Activated T-helper 2 cell treated with anti-CD3 and anti-CD28 coated beads, Interferon-gamma antibody, Interleukin-2, Interleukin-4, amounts not matched to agents 10 μg/mL and 5 μg/mL and 100 μg/mL, durations not matched to agents 14 hours and 24 hours and 36 hours (primary cell): ENCODE measurements at regions of chr2 and their contacts with region 1.

Region 1: DNA sequence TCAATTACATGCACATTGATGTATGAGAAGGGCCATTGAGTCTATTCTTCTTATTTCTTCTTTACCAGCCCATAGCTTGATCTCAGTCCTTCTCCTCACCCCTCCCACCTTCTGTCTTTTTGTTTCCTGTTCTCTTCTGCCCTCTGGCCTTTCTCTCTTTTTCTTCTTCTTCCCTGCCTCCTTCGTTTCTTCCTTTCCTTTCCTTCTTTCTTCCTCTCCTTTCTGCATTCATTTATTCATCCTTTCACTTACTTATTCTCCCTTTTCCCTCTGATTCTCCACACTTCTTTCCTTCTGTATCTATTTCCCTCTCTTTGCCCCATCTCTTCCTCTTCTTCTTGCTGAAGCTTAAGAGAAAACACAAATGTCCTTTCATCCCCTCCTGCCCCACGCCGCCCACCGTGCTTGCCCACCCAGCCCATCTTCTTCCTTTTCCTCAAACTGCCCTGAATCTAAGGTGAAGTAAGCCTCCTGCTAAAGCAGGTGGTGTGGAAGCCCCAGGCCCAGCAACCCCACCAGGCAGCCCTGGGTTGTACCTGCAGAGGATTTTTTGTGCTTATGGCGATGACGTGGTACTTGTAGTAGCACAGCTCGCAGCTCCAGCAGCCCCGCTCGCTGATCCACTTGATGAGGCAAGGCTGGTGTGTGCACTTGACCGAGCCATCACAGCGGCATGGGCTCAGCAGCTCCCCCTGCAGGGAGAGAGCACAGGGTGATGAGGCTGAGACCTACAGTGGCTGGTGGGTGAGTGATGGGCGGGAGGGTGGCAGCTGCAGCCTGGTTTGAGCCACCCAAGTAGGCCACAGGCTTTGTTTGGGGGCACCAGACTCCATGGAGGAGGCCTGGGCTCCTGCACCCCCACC is 89.0 kb downstream of the MARCHF4 start:
- DNase-seq: no peak
- H3K4me3 Mint-ChIP-seq: no peak overlapping the region
- H3K27ac Mint-ChIP-seq: no peak overlapping the region
- H3K4me1 Mint-ChIP-seq: no peaks in the 10 kb centered on the region
- H3K27me3 Mint-ChIP-seq: no peaks in the 10 kb centered on the region

Region 2: GRCh38 chr2:215476424-215476823 is 806.8 kb before region 1 on chr2:
- intact Hi-C with region 1: no loop called
- DNase-seq: no peak
- H3K4me3 Mint-ChIP-seq: no peak overlapping the region
- H3K27ac Mint-ChIP-seq: no peak overlapping the region
- H3K4me1 Mint-ChIP-seq: no peaks in the 10 kb centered on the region
- H3K27me3 Mint-ChIP-seq: peaks cover 6% of the 10 kb centered on the region

Region 3: DNA sequence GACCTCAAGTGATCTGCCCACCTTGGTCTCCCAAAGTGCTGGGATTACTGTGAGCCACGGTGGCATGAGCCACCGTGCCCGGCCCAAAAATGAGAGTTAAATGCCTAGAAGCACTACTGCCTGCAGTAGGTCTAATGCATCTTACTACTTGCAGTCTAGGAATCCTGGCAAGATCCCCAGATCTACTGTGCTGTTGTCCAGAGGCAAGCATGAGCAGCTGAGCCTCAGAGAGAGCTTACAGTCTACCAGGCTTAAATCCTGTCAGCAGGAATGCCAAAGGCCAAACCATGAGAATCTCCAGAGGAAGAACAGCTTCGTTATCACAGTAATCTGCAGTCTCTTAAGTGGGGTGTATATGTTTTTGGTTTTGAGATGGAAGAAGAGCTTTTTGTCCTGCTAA is 119.8 kb before region 1 on chr2:
- intact Hi-C with region 1: loop called (anchors 10 kb)
- DNase-seq: no peak
- H3K4me3 Mint-ChIP-seq: no peak overlapping the region
- H3K27ac Mint-ChIP-seq: no peak overlapping the region
- H3K4me1 Mint-ChIP-seq: peaks cover 6% of the 10 kb centered on the region
- H3K27me3 Mint-ChIP-seq: no peaks in the 10 kb centered on the region

Region 4: GRCh38 chr2:216235462-216235861 is 47.8 kb before region 1 on chr2:
- intact Hi-C with region 1: no loop called
- DNase-seq: no peak
- H3K4me3 Mint-ChIP-seq: no peak overlapping the region
- H3K27ac Mint-ChIP-seq: no peak overlapping the region
- H3K4me1 Mint-ChIP-seq: no peaks in the 10 kb centered on the region
- H3K27me3 Mint-ChIP-seq: no peaks in the 10 kb centered on the region